Transverse colon (tissue), 4 donors: ENCODE measurements at regions of chr2 and their contacts with region 1.

Region 1: DNA sequence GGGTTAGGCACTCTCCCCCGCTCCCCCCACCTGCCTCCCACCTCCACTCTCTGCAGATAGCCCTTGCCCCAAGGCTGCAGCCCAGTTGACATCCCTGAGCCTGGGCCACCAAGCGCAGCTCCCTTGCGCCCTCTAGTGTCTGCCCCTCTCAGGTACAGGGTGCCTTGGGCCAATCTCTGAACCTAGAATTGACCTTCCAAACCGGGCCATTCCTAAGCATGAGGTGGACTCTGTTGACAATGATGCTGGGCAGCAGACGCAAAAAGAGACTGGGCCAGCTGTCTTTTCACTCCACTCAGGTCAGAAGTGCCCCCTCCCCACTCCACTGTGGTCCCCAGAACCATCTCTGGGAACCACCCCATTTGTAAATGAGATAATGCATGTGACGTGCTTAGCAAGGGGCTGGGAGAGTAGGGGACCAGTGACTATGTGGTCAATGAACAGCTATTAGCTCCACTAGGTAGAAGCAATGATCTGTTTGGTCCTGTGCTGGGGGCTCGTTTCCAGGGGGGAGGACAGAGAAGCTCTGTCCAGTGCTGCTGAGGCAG is 43.3 kb upstream of the PLB1 start:
- DNase-seq: peak; percentile 84
- H3K4me3 ChIP-seq: no peak overlapping the region
- H3K27ac ChIP-seq: no peak overlapping the region
- H3K4me1 ChIP-seq: no peaks in the 10 kb centered on the region
- H3K27me3 ChIP-seq: no peaks in the 10 kb centered on the region
- CTCF ChIP-seq: peak; percentile 92 to 93 (median 93)
- EP300 ChIP-seq: no peak
- POLR2A ChIP-seq: no peak

Region 2: DNA sequence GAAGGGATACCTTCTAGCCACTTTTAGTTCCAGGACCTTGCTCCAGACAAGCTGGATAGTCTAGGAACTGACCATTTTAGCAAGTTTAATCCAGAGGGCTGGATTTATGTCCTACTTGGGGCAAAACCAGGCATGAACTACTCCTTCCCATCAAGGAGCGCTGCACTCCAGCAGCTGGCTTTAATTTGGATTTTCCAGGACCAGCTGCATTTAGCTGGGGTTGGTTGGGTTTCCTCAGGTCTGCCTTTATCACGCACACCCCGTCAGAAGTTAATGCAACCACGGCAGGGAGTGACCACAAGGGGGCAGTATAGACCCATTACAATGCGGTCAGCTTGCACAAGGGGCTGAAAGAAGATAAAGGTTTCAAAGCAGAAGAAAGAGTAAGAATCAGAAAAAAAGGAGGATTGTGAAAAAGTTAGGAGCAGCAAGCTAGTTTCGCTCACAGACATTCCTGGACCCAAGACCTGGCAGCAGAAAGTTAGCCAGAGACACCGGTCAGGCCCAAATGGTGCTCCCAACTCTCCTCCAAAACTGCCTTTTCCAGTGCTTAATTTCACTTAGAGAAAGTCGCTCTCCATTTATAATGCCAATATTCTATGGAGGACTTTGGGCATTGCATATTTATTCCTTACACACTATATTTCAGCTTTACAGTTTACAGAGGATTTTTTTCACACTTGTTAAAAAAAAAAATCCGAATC is 748.8 kb before region 1 on chr2:
- in situ Hi-C with region 1: no loop called
- intact Hi-C with region 1: loop called (anchors 1 kb)
- DNase-seq: peak; percentile 87
- H3K4me3 ChIP-seq: no peak overlapping the region
- H3K27ac ChIP-seq: no peak overlapping the region
- H3K4me1 ChIP-seq: peaks cover 0 to 17% (median 15%) of the 10 kb centered on the region in 4 donors
- H3K27me3 ChIP-seq: no peaks in the 10 kb centered on the region
- CTCF ChIP-seq: peak; percentile 92 to 95 (median 94)
- EP300 ChIP-seq: no peak
- POLR2A ChIP-seq: no peak

Region 3: DNA sequence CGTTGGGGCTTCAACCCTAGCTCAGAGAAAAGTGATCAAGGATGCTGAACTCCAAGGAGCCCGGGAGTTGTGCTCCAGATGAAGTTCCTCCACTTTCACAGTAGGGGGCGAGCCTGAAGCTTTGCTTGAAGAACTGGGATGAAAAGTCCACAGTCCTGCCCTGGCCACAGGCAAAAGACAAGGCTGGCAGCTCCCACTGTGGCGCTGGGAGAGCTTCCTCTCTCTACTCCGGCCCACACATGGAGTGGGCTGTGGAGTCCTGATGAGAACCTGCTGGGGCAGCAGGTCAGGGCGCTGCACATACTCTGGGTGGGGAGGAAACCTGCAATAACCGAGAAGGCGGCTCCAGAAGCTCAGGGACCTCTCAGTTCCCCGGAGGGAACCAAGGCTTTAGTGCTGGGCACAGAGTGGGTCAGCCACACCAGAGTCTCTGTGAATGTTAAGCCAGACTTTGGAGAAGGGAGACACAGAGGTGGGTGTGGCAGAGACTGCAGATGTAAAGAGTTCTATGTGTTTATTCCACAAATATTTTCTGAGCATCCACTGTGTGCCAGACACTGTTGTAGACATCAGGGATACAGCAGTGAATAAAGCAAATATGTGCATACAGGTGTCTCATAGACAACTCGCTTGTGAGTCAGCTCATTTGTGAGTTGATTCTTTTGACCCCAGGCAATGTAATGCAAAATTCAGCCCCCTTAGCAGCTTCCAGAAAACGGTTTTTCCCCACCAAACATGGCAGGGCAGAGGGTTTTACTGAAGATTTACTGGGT is 729.0 kb before region 1 on chr2:
- in situ Hi-C with region 1: loop called in 2 of 4 experiments (anchors 25 kb)
- intact Hi-C with region 1: loop called (anchors 5 kb)
- DNase-seq: peak; percentile 70
- H3K4me3 ChIP-seq: no peak overlapping the region
- H3K27ac ChIP-seq: peak overlapping the region; percentile 61 to 73 (median 64)
- H3K4me1 ChIP-seq: peaks cover 4 to 12% (median 5%) of the 10 kb centered on the region in 4 donors
- H3K27me3 ChIP-seq: no peaks in the 10 kb centered on the region
- CTCF ChIP-seq: peak; percentile 75 to 85 (median 82)
- EP300 ChIP-seq: no peak
- POLR2A ChIP-seq: no peak

Region 4: DNA sequence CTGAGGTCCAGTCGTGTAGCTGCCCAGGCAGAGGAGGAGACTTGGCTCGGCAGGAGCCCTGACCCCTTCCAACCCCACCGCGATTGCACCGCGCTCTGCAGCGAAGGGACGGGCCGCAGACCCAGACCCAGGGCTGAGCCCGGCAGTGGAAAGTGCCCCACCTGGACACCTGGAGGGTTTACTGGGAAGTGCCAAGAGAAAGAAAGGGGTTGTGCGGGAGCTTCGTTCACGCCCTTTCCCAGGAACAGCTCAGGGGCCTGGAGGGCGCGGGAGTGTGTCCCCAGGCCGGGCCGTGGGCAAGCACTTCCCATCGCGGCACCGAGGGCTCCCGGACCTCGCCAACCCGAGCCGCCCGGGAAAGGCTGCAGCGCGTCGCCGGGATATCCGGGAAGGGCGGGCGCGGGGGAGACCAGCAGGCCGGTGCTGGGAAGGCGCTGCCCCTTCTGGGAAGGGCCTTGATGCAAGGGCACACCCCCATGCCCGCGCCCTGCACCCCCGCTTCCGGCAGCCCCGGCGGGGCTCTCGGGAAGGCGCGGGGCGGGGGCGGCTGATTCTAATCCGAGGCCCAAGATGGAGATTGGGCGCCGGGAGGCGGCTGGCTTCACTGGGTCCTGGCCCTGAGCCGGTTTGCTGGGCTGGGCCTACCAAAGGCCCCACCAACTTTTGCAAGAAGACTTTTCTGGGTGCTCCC is 717.2 kb before region 1 on chr2:
- in situ Hi-C with region 1: loop called in 2 of 4 experiments (anchors 25 kb)
- intact Hi-C with region 1: no loop called
- DNase-seq: peak; percentile 78
- H3K4me3 ChIP-seq: peak overlapping the region; percentile 18 to 44 (median 40)
- H3K27ac ChIP-seq: peak overlapping the region; percentile 70 to 81 (median 74)
- H3K4me1 ChIP-seq: peaks cover 0 to 20% (median 8%) of the 10 kb centered on the region in 4 donors
- H3K27me3 ChIP-seq: no peaks in the 10 kb centered on the region
- CTCF ChIP-seq: peak in 1 of 5 experiments; percentile 47
- EP300 ChIP-seq: peak; percentile 98
- POLR2A ChIP-seq: peak; percentile 68

Region 5: GRCh38 chr2:28437151-28437811 is 15.3 kb before region 1 on chr2:
- in situ Hi-C with region 1: no loop called
- intact Hi-C with region 1: no loop called
- DNase-seq: peak; percentile 88
- H3K4me3 ChIP-seq: peak overlapping the region in 1 of 4 donors; percentile 2
- H3K27ac ChIP-seq: peak overlapping the region; percentile 81 to 89 (median 87)
- H3K4me1 ChIP-seq: peaks cover 0 to 37% (median 19%) of the 10 kb centered on the region in 4 donors
- H3K27me3 ChIP-seq: no peaks in the 10 kb centered on the region
- CTCF ChIP-seq: no peak
- EP300 ChIP-seq: no peak
- POLR2A ChIP-seq: no peak